ENCODE measurements at regions of chr16 and their contacts with region 1.

Region 1: DNA sequence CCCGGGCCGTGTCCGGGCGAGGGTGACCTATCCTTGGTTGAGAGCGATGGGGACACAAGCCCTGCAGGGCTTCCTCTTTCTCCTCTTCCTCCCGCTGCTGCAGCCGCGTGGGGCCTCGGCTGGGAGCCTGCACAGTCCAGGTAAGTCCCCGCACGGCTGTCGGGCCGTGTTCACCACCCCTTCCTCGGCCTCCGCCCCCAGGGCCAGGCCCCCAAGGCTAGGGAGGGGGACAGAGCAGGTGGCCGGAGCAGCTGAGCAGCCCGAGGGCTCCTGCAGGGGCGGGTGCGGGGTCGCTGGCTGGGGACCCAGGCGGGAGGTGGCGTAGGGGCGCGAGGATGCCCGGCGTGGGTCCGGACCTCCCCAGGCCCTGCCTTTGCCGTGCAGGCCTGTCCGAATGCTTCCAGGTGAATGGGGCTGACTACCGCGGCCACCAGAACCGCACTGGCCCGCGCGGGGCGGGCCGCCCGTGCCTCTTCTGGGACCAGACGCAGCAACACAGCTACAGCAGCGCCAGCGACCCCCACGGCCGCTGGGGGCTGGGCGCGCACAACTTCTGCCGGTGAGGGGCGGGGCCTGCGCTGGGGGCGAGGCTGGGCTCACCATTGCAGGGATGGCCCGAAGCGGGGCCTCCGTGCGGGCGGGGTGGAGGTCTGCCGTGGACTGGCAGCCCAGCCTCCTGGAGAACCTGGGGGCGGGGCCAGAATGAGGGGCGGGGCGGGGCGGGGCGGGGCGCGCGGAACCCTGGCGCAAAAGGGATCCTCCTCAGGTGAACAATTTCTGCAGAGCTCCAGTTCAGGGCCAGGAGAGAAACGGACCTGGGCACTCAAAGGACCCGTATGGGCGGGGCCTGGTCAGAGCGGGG is 631 bp downstream of the KREMEN2 start:
- DNase-seq: peak; percentile 88
- CTCF ChIP-seq: no peak

Region 2: GRCh38 chr16:2777231-2777902 is 187.3 kb before region 1 on chr16 and contains the start of gene ELOB:
- CTCF ChIA-PET with region 1: no interaction called
- POLR2A ChIA-PET with region 1: no interaction called
- DNase-seq: peak; percentile 97
- CTCF ChIP-seq: no peak

Region 3: DNA sequence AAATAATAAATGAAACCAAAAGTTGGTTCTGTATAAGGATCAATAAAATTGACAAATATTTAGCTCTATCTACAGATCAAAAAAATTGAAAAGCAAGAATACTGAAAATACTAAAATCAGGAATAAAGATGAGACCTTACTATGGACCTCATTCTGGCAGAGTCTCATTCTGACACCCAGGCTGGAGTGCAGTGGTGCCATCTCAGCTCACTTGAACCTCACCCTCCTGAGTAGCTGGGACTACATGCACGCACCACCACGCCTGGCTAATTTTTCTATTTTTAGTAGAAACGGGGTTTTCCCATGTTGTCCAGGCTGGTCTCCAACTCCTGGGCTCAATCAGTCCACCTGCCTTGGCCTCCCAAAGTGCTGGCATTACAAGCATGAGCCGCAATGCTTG is 22.7 kb before region 1 on chr16:
- CTCF ChIA-PET with region 1: interaction called, 54 read pairs
- POLR2A ChIA-PET with region 1: interaction called, 5 read pairs
- DNase-seq: no peak
- CTCF ChIP-seq: no peak

Region 4: DNA sequence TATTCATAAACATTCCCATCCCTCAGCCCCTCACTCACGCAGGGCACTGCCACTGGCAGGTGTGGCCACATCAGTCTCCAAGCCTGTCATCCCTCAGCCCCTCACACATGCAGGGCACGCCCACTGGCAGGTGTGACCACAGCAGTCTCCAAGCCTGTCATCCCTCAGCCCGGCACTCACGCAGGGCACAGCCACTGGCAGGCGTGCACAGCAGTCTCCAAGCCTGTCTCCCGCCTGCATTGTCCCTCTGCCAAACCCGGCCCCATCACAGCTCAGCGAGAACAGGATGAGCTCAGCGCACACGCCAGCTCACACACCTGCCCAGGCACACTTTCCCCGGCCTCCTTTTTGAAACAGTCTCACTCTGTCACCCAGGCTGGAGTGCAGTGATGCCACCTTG is 12.0 kb before region 1 on chr16:
- CTCF ChIA-PET with region 1: interaction called, 11 read pairs
- POLR2A ChIA-PET with region 1: no interaction called
- DNase-seq: no peak
- CTCF ChIP-seq: no peak

Region 5: GRCh38 chr16:2980227-2981086 is 15.8 kb after region 1 on chr16 and contains the start of gene PKMYT1:
- CTCF ChIA-PET with region 1: interaction called, 13 read pairs
- POLR2A ChIA-PET with region 1: interaction called, 6 read pairs
- DNase-seq: peak; percentile 100
- CTCF ChIP-seq: no peak

Region 6: DNA sequence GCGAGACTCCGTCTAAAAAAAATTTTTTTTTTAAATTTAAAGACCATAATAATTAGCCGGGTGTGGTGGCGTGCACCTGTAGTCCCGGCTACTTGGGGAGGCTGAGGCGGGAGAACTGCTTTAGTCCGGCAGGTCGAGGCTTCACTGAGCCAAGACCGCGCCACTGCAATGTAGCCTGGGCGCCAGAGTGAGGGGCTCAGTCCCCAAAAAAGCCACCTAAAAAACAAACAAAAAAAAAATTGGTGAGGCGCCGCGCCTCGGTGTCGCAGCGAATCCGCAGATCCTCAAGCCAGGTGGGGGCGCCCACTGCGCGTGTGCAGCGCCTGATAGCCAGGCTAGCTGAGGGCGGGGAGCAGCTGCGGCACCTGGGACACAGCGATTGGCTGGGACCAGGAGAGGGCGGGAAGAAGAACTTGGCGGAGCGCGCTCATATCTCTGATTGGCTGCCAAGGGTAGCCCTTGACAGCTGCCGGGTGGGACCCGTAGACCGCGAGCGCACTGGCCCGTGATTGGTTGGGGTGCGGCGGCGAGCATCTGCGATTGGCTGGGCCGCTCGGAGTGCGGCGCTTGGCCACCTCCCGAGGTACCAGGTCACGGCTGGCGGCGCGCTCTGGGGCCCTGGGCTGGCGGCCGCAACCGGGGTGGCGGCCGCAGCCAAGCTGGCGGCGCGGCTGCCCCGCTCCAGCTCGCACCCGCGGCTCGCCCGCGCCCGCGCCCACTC is 39.0 kb after region 1 on chr16:
- CTCF ChIA-PET with region 1: no interaction called
- POLR2A ChIA-PET with region 1: no interaction called
- DNase-seq: peak; percentile 99
- CTCF ChIP-seq: peak; percentile 73

Measured in GM10248 (cell line).